Endothelial cell of umbilical vein (primary cell): ENCODE measurements at regions of chr3 and their contacts with region 1.

Region 1: DNA sequence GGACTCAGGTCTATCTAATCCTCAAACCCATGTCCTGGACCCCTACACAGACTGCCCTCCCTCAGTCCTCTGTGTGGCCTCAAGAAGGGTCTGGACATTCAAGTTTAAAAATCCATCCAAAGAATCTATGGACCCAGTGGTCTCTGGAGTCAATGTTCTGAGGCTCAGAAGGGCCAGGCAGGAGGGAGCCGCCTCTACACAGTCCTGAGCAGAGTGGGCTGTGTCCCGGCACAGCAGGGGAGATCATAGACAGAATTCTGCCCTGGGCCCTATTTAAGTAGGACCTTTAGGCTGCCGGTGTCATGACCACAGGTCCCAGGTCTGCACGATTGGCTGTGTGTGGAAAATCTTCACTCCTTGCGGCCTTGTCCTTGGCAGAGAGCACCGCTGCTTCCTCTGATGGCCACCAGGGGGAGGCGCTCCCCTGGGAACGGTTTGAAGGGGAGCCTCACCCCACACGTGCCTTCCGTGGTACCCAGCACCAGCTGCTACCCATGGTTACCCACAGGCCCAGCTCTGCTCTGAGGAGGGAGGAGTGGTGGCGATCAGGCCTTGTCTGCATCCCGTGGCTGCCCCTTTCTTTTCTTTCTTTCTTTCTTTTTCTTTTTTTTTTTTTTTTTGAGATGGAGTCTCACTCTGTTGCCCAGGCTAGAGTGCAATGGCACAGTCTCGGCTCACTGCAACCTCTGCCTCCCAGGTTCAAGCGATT is 37.9 kb downstream of the CHRD start:
- DNase-seq: peak; percentile 62
- H3K4me3 ChIP-seq: no peak overlapping the region
- H3K27ac ChIP-seq: no peak overlapping the region
- H3K4me1 ChIP-seq: no peaks in the 10 kb centered on the region
- H3K27me3 ChIP-seq: no peaks in the 10 kb centered on the region
- CTCF ChIP-seq: peak; percentile 88 to 98
- POLR2A ChIP-seq: no peak

Region 2: DNA sequence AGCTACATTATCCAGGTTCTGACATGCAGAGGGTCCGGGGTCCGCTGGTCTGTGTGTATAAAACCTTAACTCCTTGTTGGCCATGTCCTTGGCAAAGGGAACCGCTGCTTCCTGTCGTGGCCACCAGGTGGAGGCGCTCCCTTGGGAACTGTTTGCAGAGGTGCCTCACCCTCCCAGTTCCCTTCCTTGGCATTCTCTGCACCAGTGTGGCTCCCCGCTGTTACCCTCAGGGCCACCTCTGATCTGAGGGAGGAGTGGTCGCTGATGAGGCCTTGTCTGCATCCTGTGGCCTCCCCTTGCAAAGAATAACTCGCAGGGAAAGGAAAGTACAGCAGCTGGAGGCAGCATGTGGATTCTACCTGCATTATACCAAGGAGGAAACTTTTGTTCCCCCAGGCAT is 51.6 kb after region 1 on chr3:
- CTCF ChIA-PET with region 1: interaction called, 198 read pairs
- POLR2A ChIA-PET with region 1: no interaction called
- dilution Hi-C with region 1: no loop called
- intact Hi-C with region 1: loop called (anchors 1 kb)
- DNase-seq: peak; percentile 42
- H3K4me3 ChIP-seq: no peak overlapping the region
- H3K27ac ChIP-seq: no peak overlapping the region
- H3K4me1 ChIP-seq: peaks cover 17% of the 10 kb centered on the region
- H3K27me3 ChIP-seq: peaks cover 2 to 16% of the 10 kb centered on the region in 2 experiments
- CTCF ChIP-seq: peak; percentile 75 to 76
- POLR2A ChIP-seq: no peak

Region 3: DNA sequence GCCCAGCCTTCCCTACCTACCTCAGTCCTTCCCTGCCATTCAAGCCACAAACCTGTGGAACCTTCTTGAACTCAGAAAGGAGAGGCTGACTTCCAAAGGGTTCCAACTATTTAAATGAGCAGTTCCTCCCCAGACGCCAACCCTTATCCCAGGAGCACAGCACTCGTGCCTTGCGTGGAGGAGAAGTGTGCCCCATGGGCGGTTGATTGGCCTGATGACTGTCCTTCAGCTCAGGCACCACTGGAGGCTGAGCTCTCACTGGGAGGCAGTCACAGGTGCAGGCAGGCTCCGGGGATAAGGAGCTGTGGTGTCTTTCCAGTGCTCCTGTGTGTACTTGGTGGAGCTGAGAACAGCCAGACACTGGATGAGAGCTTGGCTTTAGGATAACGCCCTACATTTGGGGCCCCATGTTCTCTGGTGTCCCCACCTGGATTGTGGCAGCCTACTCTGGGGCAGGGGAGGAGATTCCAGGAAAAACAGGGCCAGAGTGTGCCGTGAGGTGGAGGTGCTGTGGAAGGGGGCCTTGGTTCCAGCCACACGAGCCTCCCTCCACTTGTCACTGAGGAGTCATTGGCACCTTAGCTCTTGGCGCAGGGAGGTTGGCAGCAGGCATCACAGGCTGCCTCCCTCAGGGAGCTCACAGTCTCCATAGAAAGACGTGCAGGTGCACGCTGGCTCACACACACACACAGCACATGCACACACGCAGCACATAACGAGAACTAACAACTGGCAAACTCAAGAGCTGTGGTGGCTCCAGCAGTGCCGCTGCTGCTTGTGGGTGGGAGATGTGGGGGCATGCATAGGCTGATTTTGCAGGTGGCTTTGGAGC is 121.0 kb after region 1 on chr3:
- CTCF ChIA-PET with region 1: interaction called, 17 read pairs
- POLR2A ChIA-PET with region 1: no interaction called
- dilution Hi-C with region 1: no loop called
- intact Hi-C with region 1: loop called (anchors 1 kb)
- DNase-seq: no peak
- H3K4me3 ChIP-seq: no peak overlapping the region
- H3K27ac ChIP-seq: no peak overlapping the region
- H3K4me1 ChIP-seq: no peaks in the 10 kb centered on the region
- H3K27me3 ChIP-seq: peaks cover 18 to 31% of the 10 kb centered on the region in 2 experiments
- CTCF ChIP-seq: no peak
- POLR2A ChIP-seq: no peak